Sigmoid colon (tissue), 7 donors: ENCODE measurements at regions of chr3 and their contacts with region 1.

Region 1: DNA sequence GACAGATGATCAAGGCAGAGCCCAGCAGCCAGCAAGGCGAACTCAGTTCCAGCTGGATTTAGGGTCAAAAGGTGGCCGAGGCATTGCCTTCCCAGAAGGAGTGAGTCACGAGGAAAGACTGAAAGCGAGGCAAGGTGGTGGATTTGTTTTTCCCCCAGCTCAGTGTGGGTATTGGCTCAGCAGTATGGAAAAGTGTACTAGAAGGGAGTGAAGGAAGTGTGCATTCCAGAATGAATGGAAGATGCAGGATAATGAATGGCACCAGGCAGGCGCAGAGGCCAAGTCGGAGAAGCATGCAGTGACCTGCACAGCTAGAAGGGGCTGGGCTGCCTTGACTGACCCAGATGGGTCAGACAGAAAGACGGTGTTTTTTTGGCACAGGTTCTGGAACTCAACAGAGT is 46.3 kb downstream of the FOXP1 start:
- DNase-seq: no peak
- H3K4me3 ChIP-seq: no peak overlapping the region
- H3K27ac ChIP-seq: peak overlapping the region in 3 of 4 donors; percentile 21 to 65 (median 64)
- H3K4me1 ChIP-seq: peaks cover 0 to 47% (median 39%) of the 10 kb centered on the region in 4 donors
- H3K27me3 ChIP-seq: no peaks in the 10 kb centered on the region
- CTCF ChIP-seq: no peak
- EP300 ChIP-seq: no peak
- POLR2A ChIP-seq: no peak

Region 2: DNA sequence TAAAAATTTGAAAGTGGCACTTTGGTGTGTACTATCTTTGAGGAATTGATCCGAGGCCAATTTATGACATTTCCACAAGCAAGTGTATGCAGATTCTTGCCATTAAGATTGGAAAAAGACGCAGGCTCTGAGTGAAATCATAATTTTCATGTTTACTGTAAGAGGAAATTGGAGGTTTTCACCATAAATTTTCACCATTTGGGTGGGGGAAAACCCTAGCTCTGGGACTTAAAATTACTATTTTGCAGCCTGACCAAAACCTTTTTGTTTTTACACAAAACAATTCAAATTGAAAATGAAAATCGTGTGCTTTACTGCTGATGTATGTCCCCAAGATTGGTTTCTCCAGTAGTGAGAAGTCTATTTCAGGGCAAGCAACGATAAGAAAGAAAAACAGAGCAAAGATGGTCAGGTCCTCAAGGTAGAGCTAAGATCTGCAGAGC is 236.2 kb before region 1 on chr3:
- intact Hi-C with region 1: no loop called
- DNase-seq: no peak
- H3K4me3 ChIP-seq: no peak overlapping the region
- H3K27ac ChIP-seq: no peak overlapping the region
- H3K4me1 ChIP-seq: peaks cover 0 to 56% (median 42%) of the 10 kb centered on the region in 4 donors
- H3K27me3 ChIP-seq: no peaks in the 10 kb centered on the region
- CTCF ChIP-seq: no peak
- EP300 ChIP-seq: no peak
- POLR2A ChIP-seq: no peak

Region 3: GRCh38 chr3:71432044-71432975 is 104.9 kb before region 1 on chr3:
- intact Hi-C with region 1: loop called (anchors 1 kb)
- DNase-seq: no peak
- H3K4me3 ChIP-seq: no peak overlapping the region
- H3K27ac ChIP-seq: peak overlapping the region in 3 of 4 donors; percentile 18 to 51 (median 48)
- H3K4me1 ChIP-seq: peaks cover 0 to 50% (median 28%) of the 10 kb centered on the region in 4 donors
- H3K27me3 ChIP-seq: no peaks in the 10 kb centered on the region
- CTCF ChIP-seq: no peak
- EP300 ChIP-seq: no peak
- POLR2A ChIP-seq: no peak